GM12878 (cell line): ENCODE measurements at regions of chr1 and their contacts with region 1.

Region 1: DNA sequence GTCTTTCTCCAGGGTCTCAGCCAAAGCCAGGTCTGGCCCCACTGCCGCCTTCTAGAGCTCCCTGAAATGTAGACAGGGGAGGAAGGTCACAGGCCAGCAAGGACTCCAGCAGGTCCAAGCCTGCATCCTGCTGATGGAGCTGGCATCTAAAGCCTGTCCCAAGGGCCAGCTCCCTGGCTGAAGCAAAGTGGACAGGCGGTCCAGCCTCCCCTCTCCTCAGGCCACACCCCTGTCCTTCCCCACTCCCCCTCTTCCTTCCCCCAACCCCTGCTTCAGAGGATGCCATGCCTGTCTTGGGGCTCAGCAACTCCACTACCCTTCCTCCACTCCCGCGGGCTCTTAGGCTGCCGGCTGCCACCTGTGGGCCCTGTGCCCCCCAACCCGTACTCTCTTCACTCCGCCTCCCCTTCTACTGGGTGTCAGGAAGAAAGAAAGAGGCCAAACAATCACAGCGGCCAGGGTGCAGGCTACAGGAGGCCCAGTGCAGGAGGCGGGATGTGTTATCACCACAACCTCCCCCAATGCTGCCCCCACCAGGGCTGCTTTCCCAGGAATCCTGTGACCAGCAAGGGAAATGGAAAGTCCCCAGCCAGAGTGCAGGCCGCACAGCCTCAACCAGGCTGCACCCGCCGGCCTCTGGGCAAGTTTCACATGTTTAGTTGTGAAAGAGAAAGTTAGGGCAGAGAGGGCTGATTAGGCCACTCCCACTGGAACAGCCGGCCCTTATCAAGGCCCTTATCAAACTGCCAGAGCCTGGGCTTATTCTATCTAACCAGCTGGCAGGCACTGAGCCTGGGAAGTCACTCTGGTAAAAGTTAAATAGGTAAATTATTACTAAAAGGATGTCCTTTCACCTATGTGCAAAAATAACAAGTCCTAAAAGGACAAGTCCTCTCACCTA is 34.1 kb downstream of the ACOT7 start:
- DNase-seq: peak; percentile 50
- ATAC-seq: peak; percentile 96
- H3K4me3 ChIP-seq: peak overlapping the region; percentile 50
- H3K27ac ChIP-seq: peak overlapping the region; percentile 97
- H3K4me1 ChIP-seq: peaks cover 26% of the 10 kb centered on the region
- H3K27me3 ChIP-seq: no peaks in the 10 kb centered on the region
- CTCF ChIP-seq: 0 out of 6 replicates have a peak, but pooled peaks of 1 of the 3 experiments have one; percentile 1
- EP300 ChIP-seq: no peak
- POLR2A ChIP-seq: peak; percentile 89
- RAD21 ChIP-seq: no peak

Region 2: GRCh38 chr1:6343506-6344405 is 15.7 kb before region 1 on chr1:
- CTCF ChIA-PET with region 1: interaction called, 12 read pairs
- POLR2A ChIA-PET with region 1: interaction called, 3 read pairs
- RAD21 ChIA-PET with region 1: interaction called, 6 read pairs
- SMC1A ChIA-PET with region 1: interaction called, 8 read pairs
- in situ Hi-C with region 1: no loop called
- intact Hi-C with region 1: no loop called
- DNase-seq: no peak
- ATAC-seq: peak; percentile 94
- H3K4me3 ChIP-seq: no peak overlapping the region
- H3K27ac ChIP-seq: no peak overlapping the region
- H3K4me1 ChIP-seq: peaks cover 6% of the 10 kb centered on the region; the same call in 1 of the 2 replicates
- H3K27me3 ChIP-seq: no peaks in the 10 kb centered on the region
- CTCF ChIP-seq: peak; percentile 85 to 99 (median 87); a peak in 5 of 6 replicates
- EP300 ChIP-seq: no peak
- POLR2A ChIP-seq: no peak
- RAD21 ChIP-seq: peak; percentile 97

Region 3: DNA sequence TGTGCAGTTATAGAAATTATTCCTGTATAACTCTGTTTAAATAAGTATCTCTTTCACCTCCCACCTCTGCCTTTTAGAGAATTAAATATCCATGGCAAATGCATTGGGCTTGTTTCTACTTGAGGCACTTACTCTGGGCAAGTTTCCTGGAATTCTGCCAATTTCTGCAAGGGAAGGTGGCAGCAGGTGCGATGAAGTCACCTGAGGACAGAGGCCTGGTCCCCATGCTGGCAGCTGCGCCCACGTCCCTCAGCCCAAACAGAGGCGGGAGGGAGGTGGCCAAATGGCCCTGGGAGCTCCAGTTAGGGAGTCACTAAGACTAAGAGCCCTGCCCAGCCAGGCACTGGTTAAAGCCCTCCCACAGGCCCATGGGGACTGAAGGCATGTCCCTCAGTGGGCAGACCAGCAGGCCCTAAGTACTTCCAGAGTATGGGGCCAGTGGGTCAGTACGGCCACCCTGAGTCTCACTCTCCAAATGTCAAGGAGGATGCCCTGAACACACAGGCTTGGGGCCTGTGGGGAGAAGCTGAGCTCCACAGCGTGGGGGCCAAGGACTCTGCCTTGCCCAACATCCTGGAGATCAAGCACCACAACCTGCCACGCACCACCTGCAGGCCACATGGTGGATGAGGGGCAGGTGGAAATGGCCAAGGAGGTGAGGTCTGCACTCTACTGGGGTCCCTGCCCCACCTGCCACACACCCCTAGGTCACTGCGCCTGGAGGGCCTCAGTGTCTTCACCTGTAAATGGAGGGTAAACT is 14.7 kb after region 1 on chr1:
- CTCF ChIA-PET with region 1: interaction called, 10 read pairs
- POLR2A ChIA-PET with region 1: interaction called, 3 read pairs
- RAD21 ChIA-PET with region 1: no interaction called
- SMC1A ChIA-PET with region 1: interaction called, 3 read pairs
- in situ Hi-C with region 1: no loop called
- intact Hi-C with region 1: no loop called
- DNase-seq: no peak
- ATAC-seq: no peak
- H3K4me3 ChIP-seq: no peak overlapping the region
- H3K27ac ChIP-seq: no peak overlapping the region
- H3K4me1 ChIP-seq: no peaks in the 10 kb centered on the region
- H3K27me3 ChIP-seq: no peaks in the 10 kb centered on the region
- CTCF ChIP-seq: no peak
- EP300 ChIP-seq: no peak
- POLR2A ChIP-seq: no peak
- RAD21 ChIP-seq: no peak

Region 4: GRCh38 chr1:6393400-6394187 is 34.1 kb after region 1 on chr1 and contains the start of gene ACOT7:
- CTCF ChIA-PET with region 1: interaction called, 276 read pairs
- POLR2A ChIA-PET with region 1: interaction called, 27 read pairs
- RAD21 ChIA-PET with region 1: interaction called, 54 read pairs
- SMC1A ChIA-PET with region 1: interaction called, 17 read pairs
- in situ Hi-C with region 1: no loop called
- intact Hi-C with region 1: loop called (anchors 5 kb)
- DNase-seq: peak; percentile 25
- ATAC-seq: peak; percentile 92
- H3K4me3 ChIP-seq: peak within 1 kb of the TSS; percentile 89
- H3K27ac ChIP-seq: peak within 1 kb of the TSS; percentile 61
- H3K4me1 ChIP-seq: peaks cover 9% of the 10 kb centered on the region
- H3K27me3 ChIP-seq: no peaks in the 10 kb centered on the region
- CTCF ChIP-seq: peak in 1 of 3 experiments; percentile 31; a peak in 1 of 6 replicates
- EP300 ChIP-seq: no peak
- POLR2A ChIP-seq: peak; percentile 80
- RAD21 ChIP-seq: no peak
- polyA plus RNA-seq, gene ACOT7: 8.9 to 20.2 TPM

Region 5: DNA sequence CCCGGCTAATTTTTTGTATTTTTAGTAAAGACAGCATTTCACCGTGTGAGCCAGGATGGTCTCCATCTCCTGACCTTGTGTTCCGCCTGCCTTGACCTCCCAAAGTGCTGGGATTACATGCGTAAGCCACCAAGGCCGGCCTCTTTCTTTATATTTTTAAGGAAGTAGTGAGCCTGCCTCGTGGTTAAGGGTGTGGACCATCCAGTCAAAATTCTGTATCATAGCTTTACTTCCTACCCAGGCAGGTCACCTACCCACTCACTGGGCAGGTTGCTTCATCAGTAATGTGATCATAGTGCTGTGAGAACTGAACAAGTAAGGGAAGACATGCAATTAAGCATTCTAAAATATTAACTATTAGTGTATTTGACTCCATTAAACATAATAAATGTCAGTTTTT is 42.2 kb after region 1 on chr1:
- CTCF ChIA-PET with region 1: interaction called, 276 read pairs
- POLR2A ChIA-PET with region 1: interaction called, 4 read pairs
- RAD21 ChIA-PET with region 1: interaction called, 54 read pairs
- SMC1A ChIA-PET with region 1: interaction called, 6 read pairs
- in situ Hi-C with region 1: no loop called
- intact Hi-C with region 1: loop called (anchors 1 kb)
- DNase-seq: no peak
- ATAC-seq: no peak
- H3K4me3 ChIP-seq: no peak overlapping the region
- H3K27ac ChIP-seq: no peak overlapping the region
- H3K4me1 ChIP-seq: no peaks in the 10 kb centered on the region
- H3K27me3 ChIP-seq: no peaks in the 10 kb centered on the region
- CTCF ChIP-seq: no peak
- EP300 ChIP-seq: no peak
- POLR2A ChIP-seq: no peak
- RAD21 ChIP-seq: no peak

Region 6: GRCh38 chr1:6438047-6438525 is 78.6 kb after region 1 on chr1:
- CTCF ChIA-PET with region 1: interaction called, 23 read pairs
- POLR2A ChIA-PET with region 1: interaction called, 3 read pairs
- RAD21 ChIA-PET with region 1: interaction called, 6 read pairs
- SMC1A ChIA-PET with region 1: no interaction called
- in situ Hi-C with region 1: no loop called
- intact Hi-C with region 1: no loop called
- DNase-seq: peak; percentile 12
- ATAC-seq: peak; percentile 86
- H3K4me3 ChIP-seq: no peak overlapping the region
- H3K27ac ChIP-seq: no peak overlapping the region
- H3K4me1 ChIP-seq: no peaks in the 10 kb centered on the region
- H3K27me3 ChIP-seq: no peaks in the 10 kb centered on the region; a peak in 1 of 4 replicates
- CTCF ChIP-seq: peak; percentile 86 to 96 (median 87)
- EP300 ChIP-seq: no peak
- POLR2A ChIP-seq: no peak
- RAD21 ChIP-seq: peak; percentile 67

Region 7: GRCh38 chr1:6448749-6449631 is 89.5 kb after region 1 on chr1:
- CTCF ChIA-PET with region 1: no interaction called
- POLR2A ChIA-PET with region 1: no interaction called
- RAD21 ChIA-PET with region 1: no interaction called
- SMC1A ChIA-PET with region 1: no interaction called
- in situ Hi-C with region 1: no loop called
- intact Hi-C with region 1: no loop called
- DNase-seq: no peak
- ATAC-seq: peak; percentile 35
- H3K4me3 ChIP-seq: no peak overlapping the region
- H3K27ac ChIP-seq: no peak overlapping the region
- H3K4me1 ChIP-seq: no peaks in the 10 kb centered on the region; the same call in 1 of the 2 replicates
- H3K27me3 ChIP-seq: peaks cover 5 to 6% of the 10 kb centered on the region in 2 experiments; a peak in 3 of 4 replicates
- CTCF ChIP-seq: no peak
- EP300 ChIP-seq: no peak
- POLR2A ChIP-seq: no peak
- RAD21 ChIP-seq: no peak

Region 8: DNA sequence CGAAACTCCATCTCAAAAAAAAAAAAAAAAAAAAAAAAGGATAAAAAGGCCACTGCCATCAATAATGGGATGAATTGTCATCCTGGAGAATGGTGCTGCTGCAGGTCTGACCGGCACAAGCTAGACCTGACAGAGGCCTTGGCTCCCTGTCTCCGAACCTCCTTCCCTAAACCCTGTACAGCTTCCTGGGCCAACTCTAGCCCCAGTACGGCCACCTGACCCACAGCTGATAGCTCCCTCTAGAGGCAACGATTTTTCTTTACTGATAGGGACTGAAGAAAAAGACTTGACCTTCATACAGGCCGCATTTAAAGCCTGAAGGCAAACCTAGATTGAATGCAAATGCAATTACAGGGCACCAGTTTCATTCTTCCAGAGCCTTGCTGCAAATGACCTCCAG is 164.1 kb after region 1 on chr1:
- CTCF ChIA-PET with region 1: no interaction called
- POLR2A ChIA-PET with region 1: no interaction called
- RAD21 ChIA-PET with region 1: no interaction called
- SMC1A ChIA-PET with region 1: no interaction called
- in situ Hi-C with region 1: no loop called
- intact Hi-C with region 1: no loop called
- DNase-seq: no peak
- ATAC-seq: peak; percentile 71
- H3K4me3 ChIP-seq: no peak overlapping the region
- H3K27ac ChIP-seq: no peak overlapping the region
- H3K4me1 ChIP-seq: no peaks in the 10 kb centered on the region
- H3K27me3 ChIP-seq: no peaks in the 10 kb centered on the region
- CTCF ChIP-seq: peak; percentile 31 to 47 (median 35); a peak in 4 of 6 replicates
- EP300 ChIP-seq: no peak
- POLR2A ChIP-seq: no peak
- RAD21 ChIP-seq: 0 out of 2 replicates have a peak, but pooled peaks have one; percentile 23